ENCODE measurements at regions of chrX and their contacts with region 1.

Region 1: GRCh38 chrX:51487960-51488267 is 8.5 kb downstream of the NUDT11 start:
- DNase-seq: no peak
- H3K4me3 ChIP-seq: no peak overlapping the region
- H3K27ac ChIP-seq: no peak overlapping the region
- H3K4me1 ChIP-seq: no peaks in the 10 kb centered on the region
- H3K27me3 ChIP-seq: no peaks in the 10 kb centered on the region
- CTCF ChIP-seq: no peak
- EP300 ChIP-seq: no peak
- RAD21 ChIP-seq: no peak

Region 2: DNA sequence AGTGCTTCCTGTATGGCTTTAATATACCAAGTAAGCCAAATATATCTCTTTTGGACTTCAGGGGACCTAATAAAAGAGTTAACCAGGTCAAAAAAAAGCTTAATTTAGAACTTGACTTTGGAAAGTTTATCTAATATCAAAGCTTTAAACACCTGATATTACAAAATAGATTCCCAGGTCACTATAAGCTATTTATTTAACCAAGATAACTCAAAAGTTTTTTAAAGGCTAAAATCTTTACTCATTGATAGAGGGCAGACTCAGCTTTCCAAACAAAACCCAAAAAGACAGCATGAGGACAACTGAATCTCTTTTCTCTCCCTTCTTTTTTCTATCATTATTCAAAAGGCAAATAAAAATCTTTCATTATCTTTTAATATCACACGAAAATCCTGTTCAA is 11.0 kb before region 1 on chrX:
- CTCF ChIA-PET with region 1: interaction called, 29 read pairs
- POLR2A ChIA-PET with region 1: no interaction called
- DNase-seq: no peak
- H3K4me3 ChIP-seq: no peak overlapping the region
- H3K27ac ChIP-seq: no peak overlapping the region
- H3K4me1 ChIP-seq: no peaks in the 10 kb centered on the region
- H3K27me3 ChIP-seq: peaks cover 6% of the 10 kb centered on the region; the same call in 1 of the 2 replicates
- CTCF ChIP-seq: no peak
- EP300 ChIP-seq: no peak
- RAD21 ChIP-seq: no peak

Measured in SK-N-SH (cell line).